PC-3 (cell line): ENCODE measurements at regions of chrX and their contacts with region 1.

Region 1: GRCh38 chrX:107654872-107655761 is 26.8 kb downstream of the PRPS1 start:
- DNase-seq: peak; percentile 86
- ATAC-seq: peak; percentile 84
- H3K4me3 ChIP-seq: peak overlapping the region; percentile 34
- H3K27ac ChIP-seq: peak overlapping the region; percentile 89
- H3K4me1 ChIP-seq: peaks cover 19% of the 10 kb centered on the region
- H3K27me3 ChIP-seq: no peaks in the 10 kb centered on the region
- CTCF ChIP-seq: peak; percentile 88

Region 2: DNA sequence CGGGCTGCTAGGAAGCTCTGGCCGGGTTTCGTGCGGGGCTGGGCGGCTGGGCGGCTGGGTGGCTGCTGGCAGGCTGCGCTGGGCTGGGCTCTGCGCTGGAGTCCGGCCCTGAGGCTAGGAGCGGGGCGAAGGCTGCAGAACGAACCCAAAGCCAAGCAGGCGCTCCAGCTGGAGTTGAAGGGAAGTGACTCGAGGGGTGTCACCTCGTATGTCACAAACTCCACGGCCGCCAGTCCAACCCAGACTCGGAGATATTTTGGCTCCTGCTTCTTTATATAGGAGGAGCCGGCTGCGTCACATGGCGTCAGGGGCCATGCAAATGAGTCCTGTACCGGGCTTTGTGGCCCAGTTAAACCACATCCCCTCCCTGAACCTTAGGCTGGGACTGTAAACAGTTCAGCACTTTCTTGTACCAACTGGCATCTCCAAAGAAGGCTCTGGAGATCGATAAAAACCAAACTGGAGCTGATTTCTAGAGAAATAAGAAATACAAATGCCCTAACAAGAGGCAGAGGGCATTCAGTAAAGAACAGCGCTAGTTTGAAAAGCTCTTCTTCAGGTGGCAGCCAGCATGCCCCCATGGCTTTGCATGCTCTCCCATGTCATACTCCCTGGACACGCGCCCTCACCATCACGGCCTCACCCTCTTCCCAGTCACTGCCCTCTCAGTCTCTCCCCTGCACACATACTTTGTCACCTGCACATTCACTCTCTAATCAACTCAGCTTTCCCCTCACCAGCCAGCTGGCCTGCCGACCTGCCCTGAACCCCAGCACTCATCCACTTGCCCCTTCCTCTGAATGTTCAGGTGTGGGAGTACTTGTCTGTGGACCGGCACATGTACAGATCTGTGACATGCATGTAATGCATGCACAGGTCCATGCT is 61.9 kb after region 1 on chrX:
- CTCF ChIA-PET with region 1: interaction called, 3 read pairs
- POLR2A ChIA-PET with region 1: no interaction called
- intact Hi-C with region 1: loop called (anchors 2 kb)
- DNase-seq: peak; percentile 69
- ATAC-seq: peak; percentile 64
- H3K4me3 ChIP-seq: peak overlapping the region; percentile 92
- H3K27ac ChIP-seq: peak overlapping the region; percentile 25; the same call in 1 of the 2 replicates
- H3K4me1 ChIP-seq: peaks cover 19% of the 10 kb centered on the region
- H3K27me3 ChIP-seq: no peaks in the 10 kb centered on the region
- CTCF ChIP-seq: no peak

Region 3: GRCh38 chrX:107894038-107894437 is 238.9 kb after region 1 on chrX:
- CTCF ChIA-PET with region 1: no interaction called
- POLR2A ChIA-PET with region 1: no interaction called
- intact Hi-C with region 1: loop called (anchors 1 kb)
- DNase-seq: peak; percentile 77
- ATAC-seq: peak; percentile 77
- H3K4me3 ChIP-seq: no peak overlapping the region
- H3K27ac ChIP-seq: no peak overlapping the region
- H3K4me1 ChIP-seq: no peaks in the 10 kb centered on the region
- H3K27me3 ChIP-seq: no peaks in the 10 kb centered on the region
- CTCF ChIP-seq: peak; percentile 76